ENCODE measurements at regions of chr10 and their contacts with region 1.

Region 1: GRCh38 chr10:59625721-59626522 is 83.7 kb downstream of the SLC16A9 start:
- DNase-seq: peak; percentile 67
- H3K4me3 ChIP-seq: no peak overlapping the region
- H3K27ac ChIP-seq: no peak overlapping the region
- H3K4me1 ChIP-seq: no peaks in the 10 kb centered on the region
- H3K27me3 ChIP-seq: peaks cover 4 to 7% of the 10 kb centered on the region in 2 experiments
- CTCF ChIP-seq: peak; percentile 68 to 69
- POLR2A ChIP-seq: no peak

Region 2: GRCh38 chr10:58952747-58953466 is 673.0 kb before region 1 on chr10:
- CTCF ChIA-PET with region 1: interaction called, 28 read pairs
- POLR2A ChIA-PET with region 1: no interaction called
- dilution Hi-C with region 1: no loop called
- intact Hi-C with region 1: loop called (anchors 1 kb)
- DNase-seq: peak; percentile 47
- H3K4me3 ChIP-seq: no peak overlapping the region
- H3K27ac ChIP-seq: no peak overlapping the region
- H3K4me1 ChIP-seq: no peaks in the 10 kb centered on the region
- H3K27me3 ChIP-seq: no peaks in the 10 kb centered on the region
- CTCF ChIP-seq: peak; percentile 42 to 64
- POLR2A ChIP-seq: no peak

Region 3: GRCh38 chr10:59499460-59499859 is 126.5 kb before region 1 on chr10:
- CTCF ChIA-PET with region 1: no interaction called
- POLR2A ChIA-PET with region 1: no interaction called
- dilution Hi-C with region 1: no loop called
- intact Hi-C with region 1: no loop called
- DNase-seq: no peak
- H3K4me3 ChIP-seq: no peak overlapping the region
- H3K27ac ChIP-seq: no peak overlapping the region
- H3K4me1 ChIP-seq: no peaks in the 10 kb centered on the region
- H3K27me3 ChIP-seq: no peaks in the 10 kb centered on the region
- CTCF ChIP-seq: no peak
- POLR2A ChIP-seq: no peak

Region 4: DNA sequence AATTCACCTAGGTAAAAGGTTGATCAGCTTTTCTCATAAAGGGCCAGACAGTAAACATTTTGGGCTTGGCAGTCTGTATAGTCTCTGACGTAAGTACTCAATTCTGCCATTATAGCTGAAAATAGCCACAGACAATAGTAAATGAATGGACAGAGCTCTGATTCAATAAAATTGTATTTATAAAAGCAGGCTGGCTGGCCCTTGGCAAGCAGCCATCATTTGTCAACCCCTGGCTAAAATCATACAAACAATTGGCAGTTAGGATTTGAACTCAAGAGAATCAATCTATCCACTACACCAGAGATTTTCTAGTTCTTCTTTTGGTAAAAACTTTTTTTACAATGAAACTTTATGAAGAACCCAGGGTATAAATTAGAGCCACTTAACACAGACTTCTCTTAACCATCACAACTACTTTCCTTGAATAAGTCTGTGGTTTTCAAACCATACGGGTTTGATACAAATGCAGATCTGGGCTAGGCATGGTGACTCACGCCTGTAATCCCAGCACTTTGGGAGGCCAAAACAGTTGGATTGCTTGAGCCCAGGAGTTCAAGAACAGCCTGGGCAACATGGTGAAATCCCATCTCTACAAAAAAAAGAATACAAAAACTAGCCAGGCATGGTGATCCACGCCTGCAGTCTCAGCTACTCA is 40.7 kb before region 1 on chr10:
- CTCF ChIA-PET with region 1: no interaction called
- POLR2A ChIA-PET with region 1: no interaction called
- dilution Hi-C with region 1: no loop called
- intact Hi-C with region 1: no loop called
- DNase-seq: peak; percentile 48
- H3K4me3 ChIP-seq: no peak overlapping the region
- H3K27ac ChIP-seq: no peak overlapping the region
- H3K4me1 ChIP-seq: no peaks in the 10 kb centered on the region
- H3K27me3 ChIP-seq: no peaks in the 10 kb centered on the region
- CTCF ChIP-seq: no peak
- POLR2A ChIP-seq: no peak

Region 5: DNA sequence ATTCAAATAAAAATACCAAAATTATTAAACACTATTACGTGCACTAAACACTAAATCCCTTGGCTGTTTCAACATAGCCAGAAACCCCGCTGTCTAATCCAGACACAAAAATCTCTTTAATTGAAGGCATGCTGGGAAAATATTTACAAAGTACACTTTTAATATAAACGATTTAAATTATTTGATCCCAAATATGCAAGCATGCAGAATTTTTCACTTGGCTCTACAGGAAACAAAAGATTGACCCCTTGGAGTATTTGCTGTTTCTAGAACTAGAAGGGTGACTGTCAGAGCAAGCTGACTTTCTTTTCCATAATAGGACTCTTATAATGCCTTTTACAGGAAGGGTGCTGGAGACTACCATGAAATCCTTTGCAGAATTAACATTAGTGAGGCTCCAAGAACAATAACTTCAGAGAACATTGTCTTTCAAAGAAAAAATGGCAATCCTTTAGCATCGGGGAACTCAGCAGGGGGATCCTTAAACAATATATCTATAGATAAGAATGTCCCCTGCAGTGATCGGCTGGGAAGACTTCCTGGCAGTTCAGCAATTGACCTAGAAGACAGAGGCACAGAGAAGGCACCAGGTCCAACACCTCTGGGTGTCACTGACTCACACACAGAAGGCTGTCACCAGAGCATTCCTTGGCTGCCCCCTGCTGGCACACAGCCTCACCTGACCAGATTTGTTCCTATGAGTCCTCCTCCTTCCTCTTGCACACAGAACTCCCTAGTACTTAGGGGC is 183.1 kb after region 1 on chr10:
- CTCF ChIA-PET with region 1: interaction called, 21 read pairs
- POLR2A ChIA-PET with region 1: no interaction called
- dilution Hi-C with region 1: no loop called
- intact Hi-C with region 1: loop called (anchors 1 kb)
- DNase-seq: peak; percentile 71
- H3K4me3 ChIP-seq: no peak overlapping the region
- H3K27ac ChIP-seq: no peak overlapping the region
- H3K4me1 ChIP-seq: no peaks in the 10 kb centered on the region
- H3K27me3 ChIP-seq: no peaks in the 10 kb centered on the region
- CTCF ChIP-seq: peak; percentile 70 to 82
- POLR2A ChIP-seq: no peak

Region 6: GRCh38 chr10:60032723-60033122 is 406.8 kb after region 1 on chr10:
- CTCF ChIA-PET with region 1: interaction called, 29 read pairs
- POLR2A ChIA-PET with region 1: no interaction called
- dilution Hi-C with region 1: no loop called
- intact Hi-C with region 1: loop called (anchors 1 kb)
- DNase-seq: peak; percentile 56
- H3K4me3 ChIP-seq: no peak overlapping the region
- H3K27ac ChIP-seq: no peak overlapping the region
- H3K4me1 ChIP-seq: no peaks in the 10 kb centered on the region
- H3K27me3 ChIP-seq: no peaks in the 10 kb centered on the region
- CTCF ChIP-seq: peak; percentile 40 to 42
- POLR2A ChIP-seq: no peak

Region 7: DNA sequence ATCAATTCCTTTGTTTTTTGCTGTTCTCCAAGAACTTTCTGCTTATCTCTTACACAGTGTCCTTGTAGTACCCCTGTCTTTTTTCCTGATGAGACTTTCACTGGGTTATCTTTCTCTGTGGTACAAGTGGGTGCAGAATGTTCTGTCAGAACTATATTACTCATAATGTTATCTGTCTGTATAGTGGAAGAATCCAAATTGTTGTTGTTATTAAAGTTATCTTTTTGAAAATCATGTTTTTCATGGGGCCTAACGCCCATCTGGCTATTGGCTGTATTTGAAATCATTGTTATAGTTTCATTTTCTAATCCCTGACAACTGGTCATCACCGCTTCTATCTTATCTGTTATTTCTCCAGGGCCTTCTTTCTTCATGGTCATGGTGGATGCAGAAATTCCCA is 443.4 kb after region 1 on chr10:
- CTCF ChIA-PET with region 1: no interaction called
- POLR2A ChIA-PET with region 1: no interaction called
- dilution Hi-C with region 1: no loop called
- intact Hi-C with region 1: no loop called
- DNase-seq: no peak
- H3K4me3 ChIP-seq: no peak overlapping the region
- H3K27ac ChIP-seq: no peak overlapping the region
- H3K4me1 ChIP-seq: no peaks in the 10 kb centered on the region
- H3K27me3 ChIP-seq: no peaks in the 10 kb centered on the region
- CTCF ChIP-seq: no peak
- POLR2A ChIP-seq: no peak

Region 8: GRCh38 chr10:60099998-60100747 is 474.3 kb after region 1 on chr10:
- CTCF ChIA-PET with region 1: interaction called, 6 read pairs
- POLR2A ChIA-PET with region 1: no interaction called
- dilution Hi-C with region 1: no loop called
- intact Hi-C with region 1: loop called (anchors 2 kb)
- DNase-seq: peak; percentile 61
- H3K4me3 ChIP-seq: no peak overlapping the region
- H3K27ac ChIP-seq: no peak overlapping the region
- H3K4me1 ChIP-seq: no peaks in the 10 kb centered on the region
- H3K27me3 ChIP-seq: no peaks in the 10 kb centered on the region
- CTCF ChIP-seq: peak; percentile 20 to 40
- POLR2A ChIP-seq: no peak

Region 9: GRCh38 chr10:60646966-60647796 is 1021.3 kb after region 1 on chr10:
- CTCF ChIA-PET with region 1: interaction called, 7 read pairs
- POLR2A ChIA-PET with region 1: no interaction called
- dilution Hi-C with region 1: no loop called
- intact Hi-C with region 1: loop called (anchors 2 kb)
- DNase-seq: peak; percentile 65
- H3K4me3 ChIP-seq: no peak overlapping the region
- H3K27ac ChIP-seq: no peak overlapping the region
- H3K4me1 ChIP-seq: no peaks in the 10 kb centered on the region
- H3K27me3 ChIP-seq: no peaks in the 10 kb centered on the region
- CTCF ChIP-seq: peak; percentile 34 to 43
- POLR2A ChIP-seq: no peak